ENCODE measurements at regions of chr7 and their contacts with region 1.

Region 1: DNA sequence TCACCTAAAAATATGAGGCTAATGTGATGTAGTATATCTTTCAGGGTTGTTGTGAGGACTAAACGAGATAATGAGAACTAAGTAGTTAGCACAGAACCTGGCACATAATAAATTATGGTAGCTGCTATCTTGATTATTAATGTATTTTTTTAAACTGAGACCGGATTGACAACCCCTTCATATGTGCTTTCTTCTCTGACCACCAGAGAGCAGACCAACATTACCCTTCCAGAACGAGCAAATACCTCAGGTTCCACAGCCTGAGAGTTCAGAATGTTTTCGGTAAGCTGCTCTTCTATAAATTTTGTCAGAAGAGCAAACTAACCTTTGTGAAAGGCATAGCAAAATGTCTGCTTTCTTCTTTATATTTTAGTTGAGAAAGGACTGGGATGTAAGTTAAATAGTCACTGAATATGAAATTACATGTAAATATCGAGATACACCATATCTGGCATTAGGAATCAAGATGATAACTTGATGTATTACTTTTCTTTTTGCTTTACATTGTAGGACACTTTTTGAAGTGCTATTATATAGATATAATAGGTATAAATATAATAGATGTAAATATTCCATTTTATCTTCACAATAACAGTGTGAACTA is 13.6 kb upstream of the BPGM start:
- DNase-seq: peak; percentile 49
- ATAC-seq: peak; percentile 63
- H3K4me3 Mint-ChIP-seq: no peak overlapping the region
- H3K27ac Mint-ChIP-seq: no peak overlapping the region
- H3K4me1 Mint-ChIP-seq: peaks cover 30% of the 10 kb centered on the region
- H3K27me3 Mint-ChIP-seq: peaks cover 7% of the 10 kb centered on the region

Region 2: GRCh38 chr7:134701272-134701671 is 68.2 kb after region 1 on chr7:
- CTCF ChIA-PET with region 1: interaction called, 39 read pairs
- POLR2A ChIA-PET with region 1: no interaction called
- intact Hi-C with region 1: loop called (anchors 1 kb)
- DNase-seq: peak; percentile 16
- ATAC-seq: peak; percentile 65
- H3K4me3 Mint-ChIP-seq: no peak overlapping the region
- H3K27ac Mint-ChIP-seq: no peak overlapping the region
- H3K4me1 Mint-ChIP-seq: no peaks in the 10 kb centered on the region
- H3K27me3 Mint-ChIP-seq: no peaks in the 10 kb centered on the region

Region 3: DNA sequence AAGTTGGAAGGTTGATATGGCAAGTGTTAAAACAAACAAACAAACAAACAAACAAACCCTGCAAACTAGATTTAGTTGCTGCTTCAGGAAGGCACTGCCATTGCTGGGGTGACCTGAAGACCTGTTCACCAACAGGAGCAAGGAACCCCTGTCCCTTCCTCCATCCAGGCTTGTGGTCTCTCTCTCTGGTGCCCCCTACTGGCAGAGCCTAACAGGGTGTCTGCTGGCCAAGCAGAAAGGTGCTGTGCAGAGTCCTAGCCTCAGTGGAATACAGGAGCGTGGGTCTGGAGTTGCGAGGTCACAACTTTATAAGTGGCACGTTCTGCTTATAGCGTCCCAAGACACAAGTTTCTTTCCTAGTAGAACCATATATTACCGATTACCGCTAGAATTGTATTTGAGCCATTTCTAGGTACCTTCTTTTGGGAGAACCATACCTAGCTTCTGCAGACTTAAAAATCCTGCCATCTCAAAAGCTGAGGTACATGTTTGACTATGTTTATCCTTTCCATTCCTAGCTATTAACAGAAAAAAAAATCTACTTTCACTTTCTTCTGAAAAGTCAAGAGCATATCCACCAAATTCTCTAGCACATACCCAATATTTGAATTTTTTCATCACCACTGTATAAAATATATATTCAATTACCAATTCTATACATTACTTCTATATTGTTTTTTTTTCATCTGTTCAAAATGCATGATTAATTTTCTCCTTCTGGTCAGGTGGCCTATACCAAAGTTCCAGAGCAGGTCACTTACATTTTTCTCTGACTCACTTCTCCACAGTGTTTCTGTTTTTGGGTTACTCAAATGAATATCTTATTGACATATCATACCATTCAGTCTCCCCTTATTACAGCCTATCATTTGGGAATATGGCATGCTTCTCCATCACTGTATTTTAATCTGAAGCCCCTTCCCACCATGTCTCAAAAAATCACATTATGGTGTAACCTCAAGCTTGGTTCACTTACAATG is 117.3 kb after region 1 on chr7:
- CTCF ChIA-PET with region 1: interaction called, 67 read pairs
- POLR2A ChIA-PET with region 1: no interaction called
- intact Hi-C with region 1: loop called (anchors 1 kb)
- DNase-seq: peak; percentile 84
- ATAC-seq: peak; percentile 87
- H3K4me3 Mint-ChIP-seq: no peak overlapping the region
- H3K27ac Mint-ChIP-seq: no peak overlapping the region
- H3K4me1 Mint-ChIP-seq: peaks cover 17% of the 10 kb centered on the region
- H3K27me3 Mint-ChIP-seq: no peaks in the 10 kb centered on the region

Region 4: DNA sequence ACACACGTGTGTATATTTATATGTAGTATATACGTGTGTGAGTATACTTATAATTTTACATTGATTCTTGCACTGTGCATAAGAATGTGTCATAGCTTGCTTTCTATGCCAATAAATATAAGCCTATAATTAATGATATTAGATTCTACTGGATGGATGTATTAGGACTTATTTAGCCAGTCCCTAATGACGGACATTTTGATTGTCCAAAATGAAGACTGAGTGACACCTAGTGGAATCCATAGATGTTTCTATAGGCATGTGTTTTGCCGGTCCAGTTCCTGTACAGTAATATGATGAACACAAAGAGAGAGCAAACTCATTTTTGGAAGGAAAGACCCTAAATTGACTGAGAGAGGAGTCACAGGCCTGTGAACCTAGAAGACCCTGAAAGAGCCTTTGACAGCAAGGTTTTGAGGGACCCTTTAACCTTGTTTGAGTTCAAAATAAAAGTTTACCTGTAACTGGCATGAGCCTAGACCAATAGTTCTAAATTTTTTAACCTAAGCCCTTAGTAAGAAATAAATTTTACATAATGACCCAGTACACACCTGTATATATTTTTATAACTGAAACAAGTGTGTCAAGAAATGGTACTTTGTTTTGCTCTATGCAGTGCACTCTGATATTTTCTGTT is 310.8 kb after region 1 on chr7:
- CTCF ChIA-PET with region 1: interaction called, 10 read pairs
- POLR2A ChIA-PET with region 1: no interaction called
- intact Hi-C with region 1: no loop called
- DNase-seq: no peak
- ATAC-seq: no peak
- H3K4me3 Mint-ChIP-seq: no peak overlapping the region
- H3K27ac Mint-ChIP-seq: no peak overlapping the region
- H3K4me1 Mint-ChIP-seq: peaks cover 18% of the 10 kb centered on the region
- H3K27me3 Mint-ChIP-seq: no peaks in the 10 kb centered on the region

Region 5: DNA sequence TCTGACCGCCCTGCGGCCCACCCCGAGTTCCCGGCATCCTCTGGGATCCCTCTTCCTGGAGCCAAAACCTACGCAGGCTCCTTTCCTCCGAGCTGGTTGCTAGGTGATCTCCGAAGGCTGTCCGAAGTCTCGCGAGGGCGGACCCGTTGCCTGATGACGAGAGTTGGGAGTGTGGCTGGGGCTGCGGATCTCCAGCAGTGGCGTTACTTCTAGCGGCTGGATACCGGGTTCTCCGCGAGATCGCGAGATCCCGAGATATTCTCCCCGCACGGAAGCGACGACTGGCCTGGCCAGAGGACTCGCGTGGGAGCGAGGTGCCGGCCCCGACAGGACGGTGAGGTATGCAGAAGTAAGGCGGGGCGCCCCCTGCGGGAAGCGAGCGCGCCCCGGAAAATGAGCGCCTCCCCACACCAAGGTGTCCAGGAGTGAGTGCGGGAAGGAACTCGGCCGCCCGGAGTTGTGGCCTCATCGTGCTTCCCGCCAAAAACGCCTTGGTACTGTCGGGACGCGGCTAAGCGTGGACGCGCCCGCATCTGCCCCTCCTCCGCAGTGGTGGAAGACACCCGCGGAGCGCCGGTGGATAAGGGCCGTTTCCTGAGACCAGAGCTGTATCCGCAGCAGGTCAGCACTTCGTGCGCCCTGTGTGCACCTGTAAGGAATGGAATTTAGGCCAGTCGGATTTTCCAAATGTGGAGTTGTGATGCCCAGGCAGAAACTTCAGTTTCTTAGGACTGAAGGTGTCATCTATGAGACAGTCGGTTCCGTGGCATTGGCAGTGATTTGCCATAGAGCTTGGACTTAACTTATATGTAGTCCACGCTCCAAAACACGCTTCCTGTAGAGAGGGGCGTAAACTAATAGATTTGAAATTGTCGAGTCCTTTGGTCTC is 353.6 kb after region 1 on chr7 and contains the start of gene AGBL3:
- CTCF ChIA-PET with region 1: interaction called, 12 read pairs
- POLR2A ChIA-PET with region 1: no interaction called
- intact Hi-C with region 1: no loop called
- DNase-seq: peak; percentile 95
- ATAC-seq: peak; percentile 97
- H3K4me3 Mint-ChIP-seq: peak within 1 kb of the TSS; percentile 91
- H3K27ac Mint-ChIP-seq: peak within 1 kb of the TSS; percentile 95
- H3K4me1 Mint-ChIP-seq: peaks cover 36% of the 10 kb centered on the region
- H3K27me3 Mint-ChIP-seq: no peaks in the 10 kb centered on the region
- total RNA-seq, gene AGBL3: 2.1 to 2.2 TPM